Calu3 (cell line): ENCODE measurements at regions of chr9 and their contacts with region 1.

Region 1: DNA sequence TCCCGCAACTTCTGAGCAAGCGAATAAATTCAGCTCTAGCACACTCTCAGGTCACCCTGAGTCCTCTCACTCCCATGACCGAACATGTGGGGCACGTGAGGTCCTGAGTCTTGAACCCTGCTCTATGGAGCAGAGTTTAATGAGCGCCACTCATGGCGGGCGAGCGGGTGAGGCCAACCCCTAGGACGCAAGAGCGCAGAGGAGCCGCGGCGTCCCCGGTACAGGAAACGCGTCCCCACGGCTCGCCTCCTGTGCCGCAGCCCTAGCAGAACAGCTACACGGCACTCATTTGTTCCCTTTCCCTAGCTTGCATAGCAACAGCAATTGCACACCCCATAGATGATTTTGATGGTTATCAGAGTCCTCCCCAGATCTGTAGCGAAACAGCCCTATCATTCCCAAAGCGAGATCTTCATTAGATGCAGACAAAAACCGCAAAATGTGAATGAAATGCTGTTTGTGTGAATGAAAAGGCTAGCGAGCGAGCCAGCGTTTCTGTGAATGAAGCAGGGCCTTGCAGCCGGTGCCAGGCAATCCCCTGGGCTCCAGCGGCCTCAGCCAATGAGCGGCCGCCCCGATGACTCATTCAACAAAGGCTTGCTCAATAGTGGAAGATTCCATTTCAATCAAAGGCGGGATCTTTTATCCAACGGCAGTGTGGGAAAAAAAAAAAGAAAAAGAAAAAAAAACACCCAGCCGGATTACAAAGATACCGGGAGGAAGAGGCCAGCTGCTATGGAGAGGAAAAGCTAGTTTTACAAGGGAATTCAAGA is 1.5 kb upstream of the SHC3 start:
- DNase-seq: peak; percentile 83
- H3K4me3 Mint-ChIP-seq: peak overlapping the region; percentile 80
- H3K27ac Mint-ChIP-seq: peak overlapping the region; percentile 97
- H3K4me1 Mint-ChIP-seq: peaks cover 37% of the 10 kb centered on the region
- H3K27me3 Mint-ChIP-seq: peaks cover 11% of the 10 kb centered on the region
- CTCF ChIP-seq: no peak

Region 2: DNA sequence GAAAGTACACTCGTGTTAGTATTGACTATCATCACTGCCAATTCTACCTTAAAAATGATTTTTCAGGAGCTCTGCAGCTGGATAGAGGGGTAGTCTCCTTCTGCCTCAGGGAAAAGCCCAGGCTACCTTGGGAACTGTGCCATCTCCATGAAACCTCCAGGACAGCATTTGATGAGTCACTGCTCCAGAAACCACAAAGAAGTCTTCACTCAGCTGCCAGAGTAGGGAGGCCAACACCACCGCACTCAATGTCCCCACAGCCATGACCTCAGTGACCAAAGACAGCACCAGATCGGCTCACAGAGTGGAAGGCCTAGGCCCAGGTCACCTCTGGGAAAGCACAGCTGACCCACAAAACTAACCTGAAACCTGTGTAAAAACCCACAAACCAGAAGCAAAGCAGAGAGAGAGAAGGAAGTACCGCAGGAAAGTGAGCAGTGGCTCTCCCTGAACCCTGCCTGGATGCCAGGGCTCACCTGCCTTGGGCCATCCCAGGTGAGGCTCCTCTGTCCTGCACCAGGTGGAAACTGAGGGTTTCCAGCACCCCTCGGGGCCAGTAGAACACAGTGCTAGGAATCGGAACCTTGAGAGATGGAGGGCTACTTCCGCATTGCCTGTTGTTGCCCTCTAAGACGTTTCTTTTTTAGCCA is 158.8 kb before region 1 on chr9:
- CTCF ChIA-PET with region 1: no interaction called
- intact Hi-C with region 1: loop called (anchors 10 kb)
- DNase-seq: peak; percentile 41
- H3K4me3 Mint-ChIP-seq: peak overlapping the region; percentile 6
- H3K27ac Mint-ChIP-seq: peak overlapping the region; percentile 75
- H3K4me1 Mint-ChIP-seq: peaks cover 15% of the 10 kb centered on the region
- H3K27me3 Mint-ChIP-seq: no peaks in the 10 kb centered on the region
- CTCF ChIP-seq: no peak

Region 3: DNA sequence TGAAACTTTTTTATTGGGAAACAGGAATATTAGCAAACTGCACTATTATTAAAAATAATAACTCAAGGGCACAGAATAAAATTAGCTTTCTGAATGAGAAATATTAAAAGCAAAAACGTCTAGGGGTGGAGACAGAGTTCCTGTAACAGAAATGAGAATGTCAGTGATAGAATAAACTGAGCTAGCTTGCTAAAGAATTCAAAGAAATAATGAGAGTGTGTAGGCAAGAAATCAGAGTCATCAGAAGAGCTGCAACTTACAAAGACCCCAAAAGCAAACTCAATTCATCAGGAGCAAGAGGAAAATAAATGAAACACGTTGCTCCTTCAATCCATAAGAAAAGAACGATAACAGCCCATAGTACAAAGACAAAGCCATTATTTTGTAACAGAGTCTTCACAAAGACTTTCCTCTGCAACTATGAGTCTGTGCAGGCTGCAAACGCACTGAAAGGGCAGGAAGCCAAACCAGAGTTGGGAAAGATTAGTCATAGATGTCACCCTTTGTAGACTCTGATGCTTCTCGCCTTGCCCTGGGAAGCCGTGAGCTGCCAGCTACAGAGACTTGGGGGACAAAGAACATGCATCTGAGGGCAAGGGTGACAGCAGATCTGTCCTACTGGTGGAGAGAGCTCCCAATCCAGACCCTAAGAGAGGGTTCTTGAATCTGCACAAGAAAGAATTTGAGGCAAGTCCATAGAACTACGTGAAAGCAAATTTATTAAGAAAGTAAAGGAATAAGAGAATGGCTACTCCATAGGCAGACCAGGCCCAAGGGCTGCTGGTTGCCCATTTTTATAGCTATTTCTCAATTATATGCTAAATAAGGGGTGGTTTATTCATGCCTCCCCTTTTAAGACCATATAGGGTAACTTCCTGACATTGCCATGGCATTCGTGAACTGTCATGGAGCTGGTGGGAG is 42.3 kb before region 1 on chr9:
- CTCF ChIA-PET with region 1: no interaction called
- intact Hi-C with region 1: loop called (anchors 5 kb)
- DNase-seq: peak; percentile 62
- H3K4me3 Mint-ChIP-seq: peak overlapping the region; percentile 36
- H3K27ac Mint-ChIP-seq: peak overlapping the region; percentile 93
- H3K4me1 Mint-ChIP-seq: peaks cover 44% of the 10 kb centered on the region
- H3K27me3 Mint-ChIP-seq: no peaks in the 10 kb centered on the region
- CTCF ChIP-seq: no peak

Region 4: GRCh38 chr9:89154651-89155336 is 25.3 kb before region 1 on chr9:
- CTCF ChIA-PET with region 1: no interaction called
- intact Hi-C with region 1: loop called (anchors 1 kb)
- DNase-seq: peak; percentile 14
- H3K4me3 Mint-ChIP-seq: peak overlapping the region; percentile 17
- H3K27ac Mint-ChIP-seq: peak overlapping the region; percentile 91
- H3K4me1 Mint-ChIP-seq: peaks cover 30% of the 10 kb centered on the region
- H3K27me3 Mint-ChIP-seq: no peaks in the 10 kb centered on the region
- CTCF ChIP-seq: no peak

Region 5: GRCh38 chr9:89311347-89312221 is 131.5 kb after region 1 on chr9:
- CTCF ChIA-PET with region 1: no interaction called
- intact Hi-C with region 1: loop called (anchors 2 kb)
- DNase-seq: no peak
- H3K4me3 Mint-ChIP-seq: peak overlapping the region; percentile 81
- H3K27ac Mint-ChIP-seq: peak overlapping the region; percentile 100
- H3K4me1 Mint-ChIP-seq: no peaks in the 10 kb centered on the region
- H3K27me3 Mint-ChIP-seq: no peaks in the 10 kb centered on the region
- CTCF ChIP-seq: no peak